CD4-positive, alpha-beta memory T cell (primary cell): ENCODE measurements at regions of chr13 and their contacts with region 1.

Region 1: GRCh38 chr13:27826379-27827353 is 34.4 kb downstream of the GSX1 start:
- DNase-seq: peak; percentile 51 to 65 (median 56)
- H3K4me3 ChIP-seq: no peak overlapping the region
- H3K4me3 Mint-ChIP-seq: peak overlapping the region in 3 of 8 donors; percentile 6 to 48 (median 30)
- H3K27ac ChIP-seq: no peak overlapping the region
- H3K27ac Mint-ChIP-seq: no peak overlapping the region
- H3K4me1 ChIP-seq: peaks cover 12% of the 10 kb centered on the region
- H3K4me1 Mint-ChIP-seq: peaks cover 3 to 12% (median 5%) of the 10 kb centered on the region in 4 donors
- H3K27me3 ChIP-seq: peaks cover 17% of the 10 kb centered on the region
- H3K27me3 Mint-ChIP-seq: peaks cover 37 to 58% of the 10 kb centered on the region in 2 donors

Region 2: GRCh38 chr13:27374650-27375049 is 452.0 kb before region 1 on chr13:
- CTCF ChIA-PET with region 1: interaction called, 283 read pairs
- POLR2A ChIA-PET with region 1: no interaction called
- intact Hi-C with region 1: loop called (anchors 1 kb)
- DNase-seq: peak; percentile 46 to 56 (median 49)
- H3K4me3 ChIP-seq: no peak overlapping the region
- H3K4me3 Mint-ChIP-seq: no peak overlapping the region
- H3K27ac ChIP-seq: no peak overlapping the region
- H3K27ac Mint-ChIP-seq: no peak overlapping the region
- H3K4me1 ChIP-seq: no peaks in the 10 kb centered on the region
- H3K4me1 Mint-ChIP-seq: peaks cover 2 to 10% (median 5%) of the 10 kb centered on the region in 4 donors
- H3K27me3 ChIP-seq: no peaks in the 10 kb centered on the region
- H3K27me3 Mint-ChIP-seq: peaks cover 12 to 22% of the 10 kb centered on the region in 2 donors

Region 3: GRCh38 chr13:27424246-27425157 is 402.2 kb before region 1 on chr13 and contains the start of gene GTF3A:
- CTCF ChIA-PET with region 1: interaction called, 16 read pairs
- POLR2A ChIA-PET with region 1: interaction called, 3 read pairs
- intact Hi-C with region 1: no loop called
- DNase-seq: peak; percentile 85 to 96 (median 92)
- H3K4me3 ChIP-seq: peak within 1 kb of the TSS; percentile 66 to 89
- H3K4me3 Mint-ChIP-seq: peak within 1 kb of the TSS; percentile 87 to 96 (median 94)
- H3K27ac ChIP-seq: peak within 1 kb of the TSS; percentile 95
- H3K27ac Mint-ChIP-seq: peak within 1 kb of the TSS; percentile 89 to 99 (median 97)
- H3K4me1 ChIP-seq: peaks cover 51% of the 10 kb centered on the region
- H3K4me1 Mint-ChIP-seq: peaks cover 27 to 53% (median 40%) of the 10 kb centered on the region in 4 donors
- H3K27me3 ChIP-seq: no peaks in the 10 kb centered on the region
- H3K27me3 Mint-ChIP-seq: no peaks in the 10 kb centered on the region
- total RNA-seq, gene GTF3A: 225 to 236 TPM

Region 4: GRCh38 chr13:27533155-27533643 is 293.5 kb before region 1 on chr13:
- CTCF ChIA-PET with region 1: interaction called, 77 read pairs
- POLR2A ChIA-PET with region 1: no interaction called
- intact Hi-C with region 1: loop called (anchors 1 kb)
- DNase-seq: peak; percentile 21 to 53 (median 33)
- H3K4me3 ChIP-seq: no peak overlapping the region
- H3K4me3 Mint-ChIP-seq: peak overlapping the region in 3 of 8 donors; percentile 21 to 57 (median 41)
- H3K27ac ChIP-seq: no peak overlapping the region
- H3K27ac Mint-ChIP-seq: no peak overlapping the region
- H3K4me1 ChIP-seq: peaks cover 8% of the 10 kb centered on the region
- H3K4me1 Mint-ChIP-seq: peaks cover 6 to 12% (median 8%) of the 10 kb centered on the region in 4 donors
- H3K27me3 ChIP-seq: no peaks in the 10 kb centered on the region
- H3K27me3 Mint-ChIP-seq: peaks cover 0 to 1% of the 10 kb centered on the region in 2 donors

Region 5: GRCh38 chr13:27808851-27809550 is 17.7 kb before region 1 on chr13:
- CTCF ChIA-PET with region 1: interaction called, 15 read pairs
- POLR2A ChIA-PET with region 1: no interaction called
- intact Hi-C with region 1: no loop called
- DNase-seq: no peak
- H3K4me3 ChIP-seq: no peak overlapping the region
- H3K4me3 Mint-ChIP-seq: no peak overlapping the region
- H3K27ac ChIP-seq: no peak overlapping the region
- H3K27ac Mint-ChIP-seq: no peak overlapping the region
- H3K4me1 ChIP-seq: no peaks in the 10 kb centered on the region
- H3K4me1 Mint-ChIP-seq: no peaks in the 10 kb centered on the region
- H3K27me3 ChIP-seq: no peaks in the 10 kb centered on the region
- H3K27me3 Mint-ChIP-seq: peaks cover 38 to 39% of the 10 kb centered on the region in 2 donors

Region 6: GRCh38 chr13:27953676-27954405 is 127.2 kb after region 1 on chr13:
- CTCF ChIA-PET with region 1: interaction called, 10 read pairs
- POLR2A ChIA-PET with region 1: no interaction called
- intact Hi-C with region 1: no loop called
- DNase-seq: peak in 4 of 5 donors; percentile 42 to 52 (median 46)
- H3K4me3 ChIP-seq: peak overlapping the region in 1 of 2 donors; percentile 32
- H3K4me3 Mint-ChIP-seq: peak overlapping the region; percentile 58 to 82 (median 74)
- H3K27ac ChIP-seq: no peak overlapping the region
- H3K27ac Mint-ChIP-seq: no peak overlapping the region
- H3K4me1 ChIP-seq: peaks cover 6% of the 10 kb centered on the region
- H3K4me1 Mint-ChIP-seq: peaks cover 0 to 16% (median 10%) of the 10 kb centered on the region in 4 donors
- H3K27me3 ChIP-seq: peaks cover 45% of the 10 kb centered on the region
- H3K27me3 Mint-ChIP-seq: peaks cover 41 to 51% of the 10 kb centered on the region in 2 donors

Region 7: GRCh38 chr13:28258417-28258816 is 431.8 kb after region 1 on chr13:
- CTCF ChIA-PET with region 1: no interaction called
- POLR2A ChIA-PET with region 1: no interaction called
- intact Hi-C with region 1: no loop called
- DNase-seq: no peak
- H3K4me3 ChIP-seq: no peak overlapping the region
- H3K4me3 Mint-ChIP-seq: no peak overlapping the region
- H3K27ac ChIP-seq: no peak overlapping the region
- H3K27ac Mint-ChIP-seq: no peak overlapping the region
- H3K4me1 ChIP-seq: no peaks in the 10 kb centered on the region
- H3K4me1 Mint-ChIP-seq: peaks cover 10 to 20% (median 14%) of the 10 kb centered on the region in 4 donors
- H3K27me3 ChIP-seq: no peaks in the 10 kb centered on the region
- H3K27me3 Mint-ChIP-seq: no peaks in the 10 kb centered on the region